Activated CD4-positive, alpha-beta T cell treated with anti-CD3 and anti-CD28 coated beads, Interleukin-2, amount 10 ng/mL, durations not matched to agents 7 days and 5 days (primary cell): ENCODE measurements at regions of chr12 and their contacts with region 1.

Region 1: GRCh38 chr12:108633534-108634248 is at the start of gene SELPLG:
- DNase-seq: peak; percentile 94
- H3K4me3 Mint-ChIP-seq: peak within 1 kb of the TSS; percentile 98
- H3K27ac Mint-ChIP-seq: peak within 1 kb of the TSS; percentile 100
- H3K4me1 Mint-ChIP-seq: peaks cover 53% of the 10 kb centered on the region
- H3K27me3 Mint-ChIP-seq: no peaks in the 10 kb centered on the region
- total RNA-seq, gene SELPLG: 207 to 214 TPM

Region 2: DNA sequence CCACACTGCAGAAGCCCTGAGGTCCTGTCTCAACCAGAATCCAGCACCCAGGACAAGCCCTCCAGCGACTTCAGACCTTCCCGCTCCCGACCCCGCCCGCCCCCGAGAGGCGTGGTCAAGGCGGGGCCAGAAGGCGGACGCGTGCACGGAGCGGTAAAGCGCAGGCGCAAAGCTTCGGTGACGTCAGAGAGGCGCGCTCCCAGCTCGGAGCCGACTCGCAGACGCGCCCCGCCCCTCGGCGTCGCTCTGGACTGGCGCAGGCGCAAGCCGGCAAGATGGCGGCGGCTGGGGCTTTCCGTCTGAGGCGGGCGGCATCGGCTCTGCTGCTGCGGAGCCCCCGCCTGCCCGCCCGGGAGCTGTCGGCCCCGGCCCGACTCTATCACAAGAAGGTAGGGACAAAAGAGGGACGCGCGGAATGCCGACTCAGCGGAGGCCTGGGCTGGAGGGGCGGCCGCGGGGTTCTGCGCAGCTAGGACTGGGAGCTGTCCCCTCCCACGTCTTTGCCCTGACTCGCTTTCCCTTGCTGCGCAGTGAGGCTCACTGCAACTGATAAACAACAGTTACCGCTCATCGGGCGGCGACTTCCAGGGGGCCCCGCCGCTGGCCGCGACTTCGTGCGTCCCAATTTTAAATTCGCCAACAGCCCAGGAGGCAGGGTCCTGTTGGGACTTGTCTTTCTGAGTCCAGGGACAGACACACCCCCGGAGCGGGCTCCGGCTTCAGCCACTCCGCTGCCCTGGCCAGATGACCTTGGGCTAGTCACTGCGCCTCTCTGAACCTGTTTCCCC is 71.1 kb before region 1 on chr12 and contains the start of gene ISCU:
- CTCF ChIA-PET with region 1: interaction called, 11 read pairs
- POLR2A ChIA-PET with region 1: interaction called, 3 read pairs
- DNase-seq: peak; percentile 98
- H3K4me3 Mint-ChIP-seq: peak within 1 kb of the TSS; percentile 100
- H3K27ac Mint-ChIP-seq: peak within 1 kb of the TSS; percentile 99
- H3K4me1 Mint-ChIP-seq: peaks cover 65% of the 10 kb centered on the region
- H3K27me3 Mint-ChIP-seq: no peaks in the 10 kb centered on the region
- total RNA-seq, gene ISCU: 60.8 to 66.0 TPM

Region 3: GRCh38 chr12:108583991-108584390 is 49.7 kb before region 1 on chr12:
- CTCF ChIA-PET with region 1: no interaction called
- POLR2A ChIA-PET with region 1: no interaction called
- DNase-seq: no peak
- H3K4me3 Mint-ChIP-seq: no peak overlapping the region
- H3K27ac Mint-ChIP-seq: no peak overlapping the region
- H3K4me1 Mint-ChIP-seq: no peaks in the 10 kb centered on the region
- H3K27me3 Mint-ChIP-seq: peaks cover 5% of the 10 kb centered on the region

Region 4: DNA sequence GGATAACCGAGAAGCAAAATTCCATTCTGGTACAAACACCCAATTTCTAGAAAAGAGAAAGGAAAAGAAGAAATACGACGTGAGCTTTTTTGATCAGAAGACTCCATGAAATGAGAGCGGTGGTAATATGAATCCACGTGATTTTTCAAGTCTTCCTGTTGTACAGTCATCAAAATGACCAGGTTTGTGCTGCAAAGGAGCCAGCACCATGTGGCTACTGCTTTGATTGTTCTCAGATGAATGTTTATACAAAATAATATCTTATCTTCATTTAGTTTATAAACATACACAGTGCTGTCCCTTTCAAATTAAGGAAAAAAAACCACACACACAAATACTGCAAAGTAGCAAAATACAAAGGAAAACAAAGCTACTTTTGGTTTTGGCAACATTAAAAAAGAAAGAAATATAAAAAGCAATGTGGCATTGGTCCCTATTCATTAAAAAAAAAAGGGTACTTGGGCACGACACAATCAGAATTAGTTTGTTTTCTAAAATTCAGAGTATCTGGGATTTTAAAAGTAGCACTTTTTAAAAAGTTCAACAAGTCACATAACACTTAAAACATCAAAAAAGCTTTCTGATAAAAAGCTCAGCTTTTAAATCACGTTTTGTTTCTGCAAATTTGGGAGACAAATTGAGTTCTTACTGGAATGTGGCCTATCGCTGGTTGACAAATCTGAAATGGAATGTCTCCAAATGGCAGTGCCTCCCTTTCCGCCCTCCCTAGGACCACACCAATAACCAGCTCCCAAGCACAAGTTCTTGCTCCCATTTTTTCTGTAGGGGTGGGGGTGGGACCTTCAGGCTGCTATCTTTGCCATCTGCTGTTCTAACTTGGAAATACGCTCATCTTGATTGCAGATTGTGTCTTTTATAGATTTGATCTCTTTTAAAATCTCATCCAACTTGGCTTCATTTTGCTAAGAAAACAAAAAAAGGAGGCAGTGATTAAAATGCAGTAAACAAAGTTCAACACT is 13.2 kb after region 1 on chr12:
- CTCF ChIA-PET with region 1: interaction called, 10 read pairs
- POLR2A ChIA-PET with region 1: interaction called, 3 read pairs
- DNase-seq: no peak
- H3K4me3 Mint-ChIP-seq: peak overlapping the region; percentile 40
- H3K27ac Mint-ChIP-seq: peak overlapping the region; percentile 89
- H3K4me1 Mint-ChIP-seq: peaks cover 32% of the 10 kb centered on the region
- H3K27me3 Mint-ChIP-seq: no peaks in the 10 kb centered on the region